ENCODE measurements at regions of chr17 and their contacts with region 1.

Region 1: GRCh38 chr17:17237026-17237799 is at the start of gene FLCN:
- DNase-seq: peak; percentile 73
- ATAC-seq: peak; percentile 89
- H3K4me3 ChIP-seq: peak within 1 kb of the TSS; percentile 87 to 95 (median 91)
- H3K27ac ChIP-seq: peak within 1 kb of the TSS; percentile 92
- H3K4me1 ChIP-seq: peaks cover 48% of the 10 kb centered on the region
- H3K27me3 ChIP-seq: no peaks in the 10 kb centered on the region
- CTCF ChIP-seq: no peak
- EP300 ChIP-seq: 0 out of 4 replicates have a peak, but pooled peaks of 1 of the 2 experiments have one; percentile 7
- POLR2A ChIP-seq: peak; percentile 84 to 91
- RAD21 ChIP-seq: peak; percentile 47; the same call in 1 of the 2 replicates
- total RNA-seq, gene FLCN: 21.8 and 24.9 TPM in 2 replicates

Region 2: DNA sequence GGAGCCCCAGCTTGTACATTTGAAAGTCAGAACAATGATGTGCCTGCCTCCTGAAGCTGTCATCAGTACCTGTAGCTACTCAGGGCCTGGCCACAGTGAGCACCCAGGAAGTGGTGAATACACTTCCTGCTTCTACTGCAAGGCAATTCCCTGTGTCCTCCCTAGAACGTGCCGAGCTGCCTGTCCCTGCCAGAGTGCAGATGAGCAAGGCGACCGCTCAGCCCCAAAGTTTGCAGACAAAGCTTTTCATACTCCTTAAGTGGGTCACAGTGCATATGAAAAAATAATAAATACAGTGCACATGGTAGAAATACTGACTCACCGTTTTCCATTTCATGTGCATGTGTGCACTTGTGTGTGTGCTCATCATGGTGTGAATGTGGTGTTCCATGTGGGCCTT is 117.7 kb before region 1 on chr17:
- CTCF ChIA-PET with region 1: no interaction called
- POLR2A ChIA-PET with region 1: no interaction called
- in situ Hi-C with region 1: no loop called
- intact Hi-C with region 1: no loop called
- DNase-seq: no peak
- ATAC-seq: no peak
- H3K4me3 ChIP-seq: no peak overlapping the region
- H3K27ac ChIP-seq: no peak overlapping the region
- H3K4me1 ChIP-seq: peaks cover 36% of the 10 kb centered on the region
- H3K27me3 ChIP-seq: no peaks in the 10 kb centered on the region
- CTCF ChIP-seq: no peak
- EP300 ChIP-seq: no peak
- POLR2A ChIP-seq: no peak
- RAD21 ChIP-seq: no peak

Region 3: DNA sequence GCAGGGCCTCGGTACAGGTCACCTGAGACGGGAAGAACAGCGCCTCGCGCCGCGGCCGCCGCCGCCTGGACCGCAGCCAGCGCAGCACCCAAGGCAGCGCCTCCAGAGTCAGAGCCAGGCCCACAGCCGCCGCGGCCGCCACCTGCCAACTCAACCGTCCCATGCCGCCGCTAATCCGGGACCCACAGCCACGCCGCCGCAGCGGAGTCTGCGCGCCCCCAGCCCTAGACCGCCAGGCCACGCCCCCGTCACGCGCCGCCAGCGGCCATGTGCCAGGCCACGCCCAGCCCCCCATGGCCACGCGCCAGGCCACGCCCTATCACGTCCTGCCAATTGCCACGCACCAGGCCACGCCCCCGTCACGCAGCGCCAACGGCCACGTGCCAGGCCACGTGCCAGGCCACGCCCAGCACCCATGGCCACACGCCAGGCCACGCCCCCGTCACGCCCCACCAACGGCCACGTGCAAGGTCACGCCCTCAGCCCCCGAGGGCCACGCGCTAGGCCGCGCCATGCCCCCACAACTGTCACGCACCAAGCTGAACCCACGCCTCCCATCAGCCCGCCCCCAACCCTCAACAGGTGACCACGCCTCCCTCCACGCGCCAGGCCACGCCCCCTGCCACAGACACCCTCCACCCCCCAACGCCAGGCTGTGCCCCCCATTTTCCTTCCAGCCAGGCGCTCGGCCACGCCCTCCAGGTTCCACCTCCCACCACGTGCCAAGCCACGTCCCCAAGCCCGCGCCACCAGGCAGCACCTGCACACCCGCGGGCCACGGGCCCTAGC is 30.9 kb before region 1 on chr17 and contains the start of gene PLD6:
- CTCF ChIA-PET with region 1: no interaction called
- POLR2A ChIA-PET with region 1: interaction called, 12 read pairs
- in situ Hi-C with region 1: no loop called
- intact Hi-C with region 1: no loop called
- DNase-seq: peak; percentile 67
- ATAC-seq: peak; percentile 76
- H3K4me3 ChIP-seq: peak within 1 kb of the TSS; percentile 75 to 85 (median 80)
- H3K27ac ChIP-seq: peak within 1 kb of the TSS; percentile 75
- H3K4me1 ChIP-seq: peaks cover 38% of the 10 kb centered on the region
- H3K27me3 ChIP-seq: no peaks in the 10 kb centered on the region; a peak in 1 of 5 replicates
- CTCF ChIP-seq: no peak; the same call in 1 of the 2 replicates
- EP300 ChIP-seq: no peak
- POLR2A ChIP-seq: peak; percentile 63 to 69; a peak in 3 of 4 replicates
- RAD21 ChIP-seq: peak; percentile 48
- total RNA-seq, gene PLD6: 6.4 and 11.4 TPM in 2 replicates